ENCODE measurements at regions of chr2 and their contacts with region 1.

Region 1: DNA sequence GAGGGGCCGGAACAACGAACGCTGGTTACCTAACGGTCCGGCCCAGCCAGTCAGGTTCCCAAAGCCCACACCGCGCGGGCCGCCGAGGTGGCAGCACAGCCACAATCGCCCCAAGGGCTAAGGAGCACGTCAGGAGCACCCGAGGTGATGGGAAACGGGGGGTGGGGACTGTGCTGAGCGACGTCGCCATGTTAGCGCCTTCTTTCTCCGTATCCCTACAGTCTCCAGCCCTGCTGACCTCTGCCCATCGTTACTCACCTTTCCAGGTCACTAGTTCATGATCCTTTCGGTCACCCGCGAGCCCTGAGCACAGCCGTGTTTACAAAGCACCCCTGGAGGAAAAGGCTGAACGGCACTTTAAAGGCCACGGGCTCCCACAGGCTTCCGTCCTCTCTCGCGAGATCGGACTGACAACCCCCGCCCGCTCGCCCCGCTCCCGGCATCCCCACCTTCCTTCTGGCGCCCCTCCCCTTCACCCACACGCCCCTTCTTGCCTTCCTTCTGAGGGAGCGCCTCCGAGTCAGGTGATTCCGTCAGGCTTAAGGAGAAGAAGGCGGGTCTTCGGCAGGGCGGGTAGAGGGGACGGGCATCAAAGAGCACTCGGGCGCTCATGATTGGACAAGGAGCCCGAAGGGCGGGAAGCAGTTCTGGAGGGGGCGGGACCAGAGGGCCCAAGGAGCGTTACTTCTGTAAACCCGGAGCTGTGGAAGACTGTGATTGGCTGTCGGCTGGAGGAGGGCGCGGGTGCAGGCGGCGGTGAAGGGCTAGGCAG is at the start of gene ATF2:
- DNase-seq: peak; percentile 96 to 99
- ATAC-seq: peak; percentile 97 to 98 (median 98)
- H3K4me3 ChIP-seq: peak within 1 kb of the TSS; percentile 67 to 98 (median 88)
- H3K27ac ChIP-seq: peak within 1 kb of the TSS; percentile 77 to 98 (median 94)
- H3K4me1 ChIP-seq: peaks cover 0 to 38% (median 26%) of the 10 kb centered on the region in 9 donors
- H3K27me3 ChIP-seq: no peaks in the 10 kb centered on the region
- CTCF ChIP-seq: no peak
- total RNA-seq, gene ATF2: 23.3 to 39.8 (median 29.9) TPM

Region 2: GRCh38 chr2:174914853-174915760 is 252.9 kb before region 1 on chr2:
- intact Hi-C with region 1: no loop called
- DNase-seq: peak in 1 of 2 donors; percentile 48
- ATAC-seq: peak in 1 of 8 donors; percentile 21
- H3K4me3 ChIP-seq: no peak overlapping the region
- H3K27ac ChIP-seq: no peak overlapping the region
- H3K4me1 ChIP-seq: peaks cover 0 to 18% (median 4%) of the 10 kb centered on the region in 9 donors
- H3K27me3 ChIP-seq: no peaks in the 10 kb centered on the region
- CTCF ChIP-seq: no peak

Region 3: DNA sequence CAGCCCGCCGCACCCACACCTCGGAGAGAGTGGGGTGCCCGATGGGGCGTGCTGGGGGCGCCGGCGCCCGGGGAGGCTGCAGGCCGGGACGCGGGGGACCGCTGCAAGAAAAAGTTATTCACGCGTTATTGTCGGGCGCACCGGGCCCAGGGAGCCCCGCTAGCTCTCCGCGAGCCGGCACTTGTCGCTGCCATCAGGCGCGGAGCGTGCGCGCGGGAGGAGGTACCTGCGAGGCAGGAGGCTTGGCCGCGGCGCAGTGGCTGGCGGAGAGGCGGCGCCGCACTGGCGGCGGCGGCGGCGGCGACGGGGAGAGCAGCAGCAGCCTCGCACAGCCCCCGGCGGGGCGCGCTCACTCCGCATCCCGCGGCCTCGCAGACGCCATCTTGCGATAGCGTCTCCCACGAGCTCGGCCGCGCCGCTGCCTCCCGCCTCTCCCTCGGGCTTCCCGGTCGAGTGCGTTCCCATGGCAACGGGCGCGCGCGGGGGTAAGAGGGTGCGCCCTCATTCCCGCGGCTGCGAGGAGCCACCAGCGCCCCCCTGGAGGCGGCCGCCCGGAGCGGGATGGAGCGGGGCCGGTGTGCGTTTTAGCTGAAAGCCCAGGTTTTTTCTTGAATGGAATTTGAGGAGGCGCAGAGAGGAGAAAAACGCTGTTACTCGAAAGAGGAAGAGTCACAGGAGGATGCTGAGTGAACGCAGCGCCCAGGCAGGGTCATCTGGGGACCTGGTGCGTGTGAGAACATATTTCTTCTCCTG is 162.8 kb before region 1 on chr2 and contains the start of gene CHN1:
- intact Hi-C with region 1: loop called in 1 of 10 experiments (anchors 10 kb)
- DNase-seq: peak; percentile 84 to 87
- ATAC-seq: peak; percentile 78 to 93 (median 85)
- H3K4me3 ChIP-seq: peak within 1 kb of the TSS; percentile 65 to 97 (median 86)
- H3K27ac ChIP-seq: peak within 1 kb of the TSS; percentile 74 to 93 (median 91)
- H3K4me1 ChIP-seq: peaks cover 0 to 72% (median 24%) of the 10 kb centered on the region in 9 donors
- H3K27me3 ChIP-seq: peaks cover 0 to 75% (median 0%) of the 10 kb centered on the region in 7 donors
- CTCF ChIP-seq: peak in 6 of 9 donors; percentile 2 to 51 (median 28)
- total RNA-seq, gene CHN1: 6.1 to 26.5 (median 17.7) TPM

Region 4: DNA sequence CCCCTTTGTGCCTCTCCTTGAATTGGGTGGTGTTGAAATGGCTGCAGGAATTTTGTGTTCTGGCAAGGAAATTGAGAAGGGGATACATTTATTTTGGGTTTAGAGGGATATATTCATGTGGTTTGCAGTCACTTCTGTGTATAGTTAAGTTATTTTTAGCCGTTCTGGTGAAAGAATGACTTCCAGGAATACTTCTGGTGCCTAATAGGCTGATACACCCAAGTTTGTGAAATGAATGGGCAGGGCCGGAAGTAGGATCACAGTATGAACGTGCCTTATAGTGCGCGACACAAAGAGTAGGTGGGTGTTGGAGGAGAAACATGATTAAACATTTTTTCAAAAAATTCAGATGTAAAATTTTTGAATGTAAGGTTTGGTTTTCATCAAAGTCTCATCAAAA is 182.1 kb after region 1 on chr2:
- intact Hi-C with region 1: no loop called
- DNase-seq: no peak
- ATAC-seq: no peak
- H3K4me3 ChIP-seq: no peak overlapping the region
- H3K27ac ChIP-seq: no peak overlapping the region
- H3K4me1 ChIP-seq: no peaks in the 10 kb centered on the region
- H3K27me3 ChIP-seq: peaks cover 0 to 33% (median 10%) of the 10 kb centered on the region in 7 donors
- CTCF ChIP-seq: no peak

Region 5: DNA sequence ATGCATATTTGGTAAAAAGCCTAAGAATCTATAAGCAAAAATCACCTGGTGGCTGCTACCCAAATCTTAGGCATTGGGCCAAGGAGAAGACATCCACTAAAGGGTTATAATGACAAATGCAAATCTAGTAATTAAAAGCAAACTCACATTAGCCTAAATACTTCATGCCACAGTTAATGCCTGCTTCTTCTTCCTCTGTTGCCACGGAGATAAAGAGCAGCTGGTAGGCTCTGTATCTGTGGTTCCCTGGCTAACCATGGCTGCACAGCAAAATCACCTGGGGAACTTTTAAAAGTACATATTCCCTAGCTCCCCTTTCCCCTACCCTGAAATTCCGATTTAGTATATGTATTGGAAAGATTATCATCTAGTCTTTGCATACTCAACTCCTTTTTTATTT is 719.8 kb after region 1 on chr2:
- intact Hi-C with region 1: no loop called
- DNase-seq: no peak
- ATAC-seq: no peak
- H3K4me3 ChIP-seq: no peak overlapping the region
- H3K27ac ChIP-seq: no peak overlapping the region
- H3K4me1 ChIP-seq: peaks cover 0 to 12% (median 0%) of the 10 kb centered on the region in 9 donors
- H3K27me3 ChIP-seq: no peaks in the 10 kb centered on the region
- CTCF ChIP-seq: no peak